Activated CD4-positive, alpha-beta T cell treated with anti-CD3 and anti-CD28 coated beads for 36 hours (primary cell): ENCODE measurements at regions of chr9 and their contacts with region 1.

Region 1: GRCh38 chr9:135907431-135908092 is at the start of gene CAMSAP1:
- DNase-seq: peak; percentile 98
- ATAC-seq: peak; percentile 81
- H3K4me3 Mint-ChIP-seq: peak within 1 kb of the TSS; percentile 81
- H3K27ac Mint-ChIP-seq: peak within 1 kb of the TSS; percentile 90
- H3K4me1 Mint-ChIP-seq: peaks cover 62% of the 10 kb centered on the region
- H3K27me3 Mint-ChIP-seq: no peaks in the 10 kb centered on the region
- total RNA-seq, gene CAMSAP1: 31.2 to 33.4 TPM

Region 2: GRCh38 chr9:134024828-134025605 is 1882.5 kb before region 1 on chr9 and contains the start of gene BRD3OS:
- CTCF ChIA-PET with region 1: no interaction called
- POLR2A ChIA-PET with region 1: no interaction called
- intact Hi-C with region 1: loop called in 1 of 2 experiments (anchors 5 kb)
- DNase-seq: peak; percentile 96
- ATAC-seq: peak; percentile 91
- H3K4me3 Mint-ChIP-seq: peak within 1 kb of the TSS; percentile 74
- H3K27ac Mint-ChIP-seq: no peak within 1 kb of the TSS
- H3K4me1 Mint-ChIP-seq: peaks cover 4% of the 10 kb centered on the region
- H3K27me3 Mint-ChIP-seq: no peaks in the 10 kb centered on the region
- total RNA-seq, gene BRD3OS: 15.1 to 18.0 TPM

Region 3: DNA sequence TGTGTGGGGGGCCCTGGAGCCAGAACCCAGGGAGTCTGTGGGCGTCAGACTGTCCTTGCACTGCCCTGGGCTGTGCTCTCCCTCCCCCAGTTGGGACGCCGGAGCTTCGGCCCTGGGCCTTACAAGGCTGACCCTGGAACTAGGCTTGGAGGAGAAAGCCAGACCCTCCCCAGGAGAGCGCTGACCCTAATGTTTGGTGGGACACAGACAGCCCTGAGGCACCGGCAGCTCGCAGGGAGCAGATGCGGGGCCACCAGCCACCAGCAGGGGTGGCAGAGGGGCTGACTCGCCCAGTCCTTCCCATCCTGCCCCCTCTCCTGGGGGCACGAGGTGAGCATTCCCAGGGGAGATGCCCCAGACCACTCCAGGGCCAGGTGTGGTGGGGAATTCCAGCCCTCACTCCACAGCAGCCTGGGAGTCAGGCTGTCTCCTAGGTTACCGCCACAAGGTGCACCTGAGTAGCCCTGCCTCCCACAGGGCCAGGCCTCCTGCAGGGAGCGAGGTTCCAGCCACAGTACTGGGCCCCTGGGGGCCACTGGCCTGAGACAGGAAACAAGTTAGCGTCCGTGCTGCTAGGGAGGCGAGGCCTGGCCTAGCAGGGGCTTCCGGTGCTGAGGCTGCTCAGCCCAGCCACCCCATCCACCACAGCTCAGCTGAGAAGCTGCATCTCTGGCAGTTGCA is 685.5 kb before region 1 on chr9:
- CTCF ChIA-PET with region 1: no interaction called
- POLR2A ChIA-PET with region 1: no interaction called
- intact Hi-C with region 1: no loop called
- DNase-seq: no peak
- ATAC-seq: no peak
- H3K4me3 Mint-ChIP-seq: no peak overlapping the region
- H3K27ac Mint-ChIP-seq: no peak overlapping the region
- H3K4me1 Mint-ChIP-seq: no peaks in the 10 kb centered on the region
- H3K27me3 Mint-ChIP-seq: peaks cover 4% of the 10 kb centered on the region

Region 4: GRCh38 chr9:135864447-135865049 is 43.0 kb before region 1 on chr9:
- CTCF ChIA-PET with region 1: interaction called, 5 read pairs
- POLR2A ChIA-PET with region 1: no interaction called
- intact Hi-C with region 1: loop called (anchors 1 to 5 kb)
- DNase-seq: peak; percentile 84
- ATAC-seq: peak; percentile 58
- H3K4me3 Mint-ChIP-seq: no peak overlapping the region
- H3K27ac Mint-ChIP-seq: no peak overlapping the region
- H3K4me1 Mint-ChIP-seq: peaks cover 31% of the 10 kb centered on the region
- H3K27me3 Mint-ChIP-seq: no peaks in the 10 kb centered on the region

Region 5: DNA sequence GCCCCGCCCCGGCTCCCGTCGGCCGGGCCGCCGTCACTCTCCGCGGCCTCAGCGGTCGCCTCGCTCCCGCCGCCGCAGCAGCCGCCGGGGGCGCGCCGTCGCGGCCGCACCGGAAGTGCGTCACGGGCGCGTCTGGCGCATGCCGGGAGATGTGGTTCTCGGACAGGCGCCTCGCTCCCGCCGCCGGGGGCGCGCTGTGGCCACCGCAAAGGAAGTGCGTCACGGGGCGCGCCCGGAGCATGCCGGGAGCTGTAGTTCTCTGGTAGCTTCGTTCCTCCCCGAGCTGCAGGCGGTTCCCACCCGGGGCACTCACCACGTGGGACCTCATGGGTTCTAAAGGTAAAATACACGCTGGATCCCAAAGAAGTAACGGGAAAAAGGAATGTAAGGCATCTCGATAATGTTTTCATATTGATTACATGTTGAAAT is 53.7 kb after region 1 on chr9 and contains the start of gene UBAC1:
- CTCF ChIA-PET with region 1: no interaction called
- POLR2A ChIA-PET with region 1: interaction called, 3 read pairs
- intact Hi-C with region 1: loop called (anchors 1 to 2 kb)
- DNase-seq: peak; percentile 98
- ATAC-seq: peak; percentile 92
- H3K4me3 Mint-ChIP-seq: peak within 1 kb of the TSS; percentile 87
- H3K27ac Mint-ChIP-seq: peak within 1 kb of the TSS; percentile 73
- H3K4me1 Mint-ChIP-seq: peaks cover 32% of the 10 kb centered on the region
- H3K27me3 Mint-ChIP-seq: no peaks in the 10 kb centered on the region
- total RNA-seq, gene UBAC1: 41.7 to 42.8 TPM

Region 6: GRCh38 chr9:136118320-136119060 is 210.9 kb after region 1 on chr9 and contains the start of gene TMEM250:
- CTCF ChIA-PET with region 1: no interaction called
- POLR2A ChIA-PET with region 1: no interaction called
- intact Hi-C with region 1: loop called in 1 of 2 experiments (anchors 1 kb)
- DNase-seq: peak; percentile 98
- ATAC-seq: peak; percentile 92
- H3K4me3 Mint-ChIP-seq: peak within 1 kb of the TSS; percentile 77
- H3K27ac Mint-ChIP-seq: peak within 1 kb of the TSS; percentile 83
- H3K4me1 Mint-ChIP-seq: peaks cover 21% of the 10 kb centered on the region
- H3K27me3 Mint-ChIP-seq: no peaks in the 10 kb centered on the region
- total RNA-seq, gene TMEM250: 25.4 to 28.8 TPM

Region 7: DNA sequence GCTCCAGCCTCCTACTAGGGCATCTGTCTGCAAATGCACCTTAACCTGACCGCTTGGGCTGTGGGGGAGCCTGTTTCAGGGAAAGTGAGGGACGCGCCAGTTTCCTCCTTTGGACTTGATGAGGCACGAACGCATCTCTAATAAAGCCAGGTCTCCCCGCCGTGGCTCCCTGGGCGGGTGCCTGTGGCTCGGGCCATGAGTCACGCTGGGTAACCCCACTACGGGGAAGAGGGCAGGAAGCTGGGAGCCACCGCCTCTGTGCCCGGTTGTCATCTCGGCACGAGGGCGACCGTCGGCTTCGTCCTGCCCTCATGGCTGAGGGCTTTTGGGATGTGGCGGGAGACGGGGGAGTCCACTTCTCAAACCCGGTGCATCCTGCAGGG is 626.2 kb after region 1 on chr9:
- CTCF ChIA-PET with region 1: no interaction called
- POLR2A ChIA-PET with region 1: no interaction called
- intact Hi-C with region 1: loop called in 1 of 2 experiments (anchors 5 kb)
- DNase-seq: peak; percentile 91
- ATAC-seq: peak; percentile 69
- H3K4me3 Mint-ChIP-seq: peak overlapping the region; percentile 59
- H3K27ac Mint-ChIP-seq: peak overlapping the region; percentile 82
- H3K4me1 Mint-ChIP-seq: peaks cover 60% of the 10 kb centered on the region
- H3K27me3 Mint-ChIP-seq: no peaks in the 10 kb centered on the region

Region 8: GRCh38 chr9:137618105-137619067 is 1710.8 kb after region 1 on chr9 and contains the start of gene EHMT1:
- CTCF ChIA-PET with region 1: no interaction called
- POLR2A ChIA-PET with region 1: no interaction called
- intact Hi-C with region 1: loop called in 1 of 2 experiments (anchors 5 kb)
- DNase-seq: peak; percentile 92
- ATAC-seq: peak; percentile 82
- H3K4me3 Mint-ChIP-seq: peak within 1 kb of the TSS; percentile 85
- H3K27ac Mint-ChIP-seq: peak within 1 kb of the TSS; percentile 90
- H3K4me1 Mint-ChIP-seq: peaks cover 37% of the 10 kb centered on the region
- H3K27me3 Mint-ChIP-seq: no peaks in the 10 kb centered on the region
- total RNA-seq, gene EHMT1: 66.6 to 76.7 TPM